Caco-2 (cell line): ENCODE measurements at regions of chr19 and their contacts with region 1.

Region 1: GRCh38 chr19:42450314-42450934 is 7.7 kb upstream of the CXCL17 start:
- DNase-seq: peak; percentile 87
- H3K4me3 ChIP-seq: no peak overlapping the region
- H3K4me3 Mint-ChIP-seq: no peak overlapping the region
- H3K27ac Mint-ChIP-seq: no peak overlapping the region
- H3K4me1 ChIP-seq: peaks cover 31% of the 10 kb centered on the region
- H3K4me1 Mint-ChIP-seq: peaks cover 8% of the 10 kb centered on the region
- H3K27me3 ChIP-seq: no peaks in the 10 kb centered on the region
- H3K27me3 Mint-ChIP-seq: no peaks in the 10 kb centered on the region
- CTCF ChIP-seq: peak; percentile 78 to 95

Region 2: DNA sequence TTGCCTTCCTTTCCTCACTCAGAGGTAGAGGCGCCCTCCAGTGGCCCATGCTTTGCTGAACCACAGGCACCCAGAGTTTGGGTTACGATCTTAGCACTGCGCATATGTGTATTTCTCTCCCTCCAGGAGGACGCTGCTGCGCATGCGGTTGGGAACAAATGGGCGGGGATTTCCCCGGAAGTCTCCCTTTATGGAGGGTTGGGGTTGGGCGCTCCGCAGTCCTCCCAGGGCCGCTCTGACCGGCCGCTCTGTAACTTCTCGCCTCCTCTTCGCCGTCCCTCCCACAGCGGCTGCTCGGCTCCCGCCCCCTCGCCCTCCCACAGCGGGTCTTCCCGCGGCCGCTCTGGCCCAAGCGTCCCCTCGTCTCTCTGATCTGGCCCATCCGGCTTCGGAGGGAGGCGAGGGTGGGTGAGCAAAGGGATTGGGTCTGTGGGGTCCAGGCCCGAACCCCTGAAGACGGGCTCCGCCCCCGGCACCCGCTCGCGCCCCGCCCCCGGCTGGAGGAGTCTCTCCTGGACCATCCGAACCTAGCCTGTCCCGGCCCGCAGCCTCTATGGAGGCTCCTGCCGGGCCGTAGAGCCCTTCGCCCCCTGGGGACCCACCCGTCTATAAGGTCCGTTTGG is 125.0 kb before region 1 on chr19 and contains the start of gene MEGF8:
- CTCF ChIA-PET with region 1: no interaction called
- POLR2A ChIA-PET with region 1: no interaction called
- intact Hi-C with region 1: no loop called
- DNase-seq: peak; percentile 99
- H3K4me3 ChIP-seq: peak within 1 kb of the TSS; percentile 71
- H3K4me3 Mint-ChIP-seq: peak within 1 kb of the TSS; percentile 89
- H3K27ac Mint-ChIP-seq: peak within 1 kb of the TSS; percentile 72
- H3K4me1 ChIP-seq: no peaks in the 10 kb centered on the region; the same call in 1 of the 2 replicates
- H3K4me1 Mint-ChIP-seq: peaks cover 17% of the 10 kb centered on the region
- H3K27me3 ChIP-seq: no peaks in the 10 kb centered on the region
- H3K27me3 Mint-ChIP-seq: peaks cover 3% of the 10 kb centered on the region
- CTCF ChIP-seq: peak; percentile 81 to 91
- total RNA-seq, gene MEGF8: 17.9 and 19.3 TPM in 2 replicates

Region 3: DNA sequence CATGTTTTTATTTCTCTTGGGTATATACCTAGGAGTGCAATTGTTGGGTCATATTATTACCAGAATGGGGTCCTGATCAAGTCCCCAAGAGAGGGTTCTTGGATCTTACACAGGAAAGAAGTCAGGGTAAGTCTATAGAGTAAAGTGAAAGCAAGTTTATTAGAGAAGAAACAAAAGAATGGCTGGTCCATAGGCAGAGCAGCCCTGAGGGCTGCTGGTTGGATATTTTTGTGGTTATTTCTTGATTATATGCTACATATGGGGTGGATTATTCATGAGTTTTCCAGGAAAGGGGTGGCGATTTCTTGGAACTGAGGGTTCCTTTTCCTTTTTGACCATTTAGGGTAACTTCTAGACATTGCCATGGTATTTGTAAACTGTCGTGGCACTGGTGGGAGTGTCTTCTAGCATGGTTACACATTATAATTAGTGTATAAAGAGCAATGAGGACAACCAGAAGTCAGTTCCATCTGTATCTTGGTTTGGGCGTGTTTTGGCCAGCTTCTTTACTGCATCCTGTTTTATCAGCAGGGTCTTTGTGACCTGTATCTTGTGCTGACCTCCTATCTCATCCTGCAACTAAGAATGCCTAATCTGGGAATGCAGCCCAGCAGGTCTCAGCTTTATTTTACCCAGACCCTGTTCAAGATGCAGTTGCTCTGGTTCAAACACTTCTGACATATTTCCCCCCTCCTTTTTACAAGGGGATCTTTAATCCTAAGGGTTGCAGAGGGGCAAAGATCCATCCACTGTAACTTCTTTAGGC is 36.8 kb after region 1 on chr19:
- CTCF ChIA-PET with region 1: interaction called, 5 read pairs
- POLR2A ChIA-PET with region 1: no interaction called
- intact Hi-C with region 1: loop called (anchors 1 kb)
- DNase-seq: peak; percentile 47 to 65
- H3K4me3 ChIP-seq: no peak overlapping the region
- H3K4me3 Mint-ChIP-seq: peak overlapping the region; percentile 17
- H3K27ac Mint-ChIP-seq: peak overlapping the region; percentile 85
- H3K4me1 ChIP-seq: peaks cover 58% of the 10 kb centered on the region
- H3K4me1 Mint-ChIP-seq: peaks cover 25% of the 10 kb centered on the region
- H3K27me3 ChIP-seq: no peaks in the 10 kb centered on the region
- H3K27me3 Mint-ChIP-seq: no peaks in the 10 kb centered on the region
- CTCF ChIP-seq: no peak

Region 4: DNA sequence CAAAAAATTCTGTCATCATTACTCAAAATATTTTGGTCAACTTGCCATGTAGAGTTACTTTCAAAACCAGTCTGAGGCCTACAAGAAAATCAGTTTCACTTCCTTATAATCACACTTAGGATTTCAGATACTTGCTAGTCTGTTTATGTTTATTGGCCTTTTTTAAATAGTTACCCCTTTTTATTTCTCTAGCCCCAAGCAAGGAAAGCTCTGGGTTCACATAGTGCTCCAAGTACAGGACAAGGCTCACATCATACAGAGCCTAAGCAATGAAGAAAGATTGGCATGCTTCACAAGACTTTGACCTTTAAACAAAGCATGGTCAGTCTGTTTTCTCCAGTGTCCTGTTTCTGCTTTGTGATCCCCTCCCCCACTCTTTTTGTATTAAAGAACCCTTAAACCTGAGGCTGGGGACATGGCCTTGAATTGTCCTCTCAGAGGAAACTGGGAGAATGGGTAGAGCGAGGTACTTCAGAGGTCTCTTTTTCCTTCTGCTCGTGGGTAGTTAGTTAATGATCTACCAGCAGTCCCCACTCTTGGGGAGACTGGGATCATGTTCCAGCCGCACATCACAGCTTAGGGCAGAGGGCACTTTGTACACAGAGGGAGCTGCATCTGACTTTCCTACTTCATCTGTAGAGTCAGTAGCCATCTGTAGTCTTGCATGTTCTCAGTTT is 47.2 kb after region 1 on chr19:
- CTCF ChIA-PET with region 1: interaction called, 7 read pairs
- POLR2A ChIA-PET with region 1: no interaction called
- intact Hi-C with region 1: loop called (anchors 1 kb)
- DNase-seq: peak; percentile 81 to 88
- H3K4me3 ChIP-seq: no peak overlapping the region
- H3K4me3 Mint-ChIP-seq: peak overlapping the region; percentile 69
- H3K27ac Mint-ChIP-seq: peak overlapping the region; percentile 32
- H3K4me1 ChIP-seq: peaks cover 33% of the 10 kb centered on the region
- H3K4me1 Mint-ChIP-seq: peaks cover 49% of the 10 kb centered on the region
- H3K27me3 ChIP-seq: no peaks in the 10 kb centered on the region
- H3K27me3 Mint-ChIP-seq: no peaks in the 10 kb centered on the region
- CTCF ChIP-seq: no peak

Region 5: GRCh38 chr19:42529248-42529764 is 78.9 kb after region 1 on chr19:
- CTCF ChIA-PET with region 1: interaction called, 70 read pairs
- POLR2A ChIA-PET with region 1: interaction called, 3 read pairs
- intact Hi-C with region 1: loop called (anchors 1 kb)
- DNase-seq: peak; percentile 74 to 85
- H3K4me3 ChIP-seq: no peak overlapping the region
- H3K4me3 Mint-ChIP-seq: no peak overlapping the region
- H3K27ac Mint-ChIP-seq: peak overlapping the region; percentile 27
- H3K4me1 ChIP-seq: peaks cover 17% of the 10 kb centered on the region
- H3K4me1 Mint-ChIP-seq: peaks cover 32% of the 10 kb centered on the region
- H3K27me3 ChIP-seq: no peaks in the 10 kb centered on the region
- H3K27me3 Mint-ChIP-seq: no peaks in the 10 kb centered on the region
- CTCF ChIP-seq: peak; percentile 95 to 98

Region 6: DNA sequence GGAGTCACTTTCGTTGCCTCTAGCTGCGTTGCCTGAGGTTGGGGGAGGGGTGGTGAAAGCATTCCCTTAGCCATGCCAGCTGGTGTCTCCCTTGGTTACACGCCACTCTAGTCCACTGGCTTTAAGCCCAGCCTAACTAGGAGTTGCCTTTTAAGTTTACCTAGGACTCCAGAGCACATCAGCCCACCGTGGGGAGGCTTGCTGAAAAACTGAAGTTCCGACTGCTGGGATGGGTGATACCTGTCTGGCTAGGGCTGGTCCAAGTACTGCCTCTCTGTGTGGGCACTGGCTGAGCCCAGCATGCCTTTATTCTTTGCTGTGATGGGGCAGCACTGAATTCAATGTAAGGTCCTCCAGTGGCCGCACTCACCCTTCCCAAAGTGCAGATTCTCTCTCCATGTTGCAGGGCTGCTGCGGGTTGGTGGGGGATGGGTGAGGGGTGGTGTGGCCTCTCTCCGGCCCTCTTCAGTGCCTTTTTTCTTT is 89.7 kb after region 1 on chr19:
- CTCF ChIA-PET with region 1: interaction called, 4 read pairs
- POLR2A ChIA-PET with region 1: no interaction called
- intact Hi-C with region 1: loop called (anchors 1 kb)
- DNase-seq: no peak
- H3K4me3 ChIP-seq: no peak overlapping the region
- H3K4me3 Mint-ChIP-seq: no peak overlapping the region
- H3K27ac Mint-ChIP-seq: no peak overlapping the region
- H3K4me1 ChIP-seq: no peaks in the 10 kb centered on the region
- H3K4me1 Mint-ChIP-seq: peaks cover 6% of the 10 kb centered on the region
- H3K27me3 ChIP-seq: no peaks in the 10 kb centered on the region
- H3K27me3 Mint-ChIP-seq: no peaks in the 10 kb centered on the region
- CTCF ChIP-seq: no peak

Region 7: GRCh38 chr19:42563352-42564210 is 113.2 kb after region 1 on chr19:
- CTCF ChIA-PET with region 1: interaction called, 10 read pairs
- POLR2A ChIA-PET with region 1: no interaction called
- intact Hi-C with region 1: loop called (anchors 1 kb)
- DNase-seq: peak; percentile 60 to 63
- H3K4me3 ChIP-seq: no peak overlapping the region
- H3K4me3 Mint-ChIP-seq: no peak overlapping the region
- H3K27ac Mint-ChIP-seq: no peak overlapping the region
- H3K4me1 ChIP-seq: no peaks in the 10 kb centered on the region
- H3K4me1 Mint-ChIP-seq: no peaks in the 10 kb centered on the region
- H3K27me3 ChIP-seq: no peaks in the 10 kb centered on the region
- H3K27me3 Mint-ChIP-seq: peaks cover 8% of the 10 kb centered on the region
- CTCF ChIP-seq: peak; percentile 76 to 87

Region 8: DNA sequence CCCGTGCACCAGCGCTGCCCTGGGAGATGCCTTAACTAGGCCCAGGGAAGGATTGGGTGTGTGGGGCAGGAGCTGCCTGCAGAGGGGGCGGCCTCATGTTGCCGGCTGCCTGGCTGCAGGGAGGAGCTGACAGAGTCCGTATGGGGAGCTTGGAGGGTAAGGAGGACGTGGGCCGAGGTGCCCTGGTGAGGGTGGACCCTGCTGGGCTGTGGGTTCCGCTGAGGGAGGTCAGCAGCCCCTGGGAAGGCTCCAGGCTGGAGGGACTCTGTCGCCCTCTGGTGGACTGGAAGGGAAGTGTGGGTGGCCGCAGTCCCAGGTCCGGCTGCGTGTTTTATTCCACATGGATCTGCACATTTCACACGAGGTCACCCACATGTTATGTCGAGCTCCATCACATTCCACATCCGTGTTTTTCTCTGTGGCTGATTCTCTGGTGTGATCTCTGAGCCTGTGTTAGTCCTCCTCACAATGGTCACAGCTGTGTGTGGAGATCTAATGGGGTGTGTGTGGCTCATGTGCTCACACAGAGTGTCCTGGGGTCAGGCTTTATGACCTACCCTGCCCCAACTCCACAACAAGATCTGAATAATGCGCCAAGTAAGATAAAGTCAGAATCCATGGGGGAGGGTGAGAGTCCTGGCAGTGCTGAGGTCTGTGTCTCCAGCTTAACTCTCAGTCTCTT is 146.1 kb after region 1 on chr19:
- CTCF ChIA-PET with region 1: no interaction called
- POLR2A ChIA-PET with region 1: no interaction called
- intact Hi-C with region 1: loop called (anchors 1 kb)
- DNase-seq: peak in 1 of 2 experiments; percentile 69
- H3K4me3 ChIP-seq: no peak overlapping the region
- H3K4me3 Mint-ChIP-seq: no peak overlapping the region
- H3K27ac Mint-ChIP-seq: no peak overlapping the region
- H3K4me1 ChIP-seq: no peaks in the 10 kb centered on the region
- H3K4me1 Mint-ChIP-seq: no peaks in the 10 kb centered on the region
- H3K27me3 ChIP-seq: no peaks in the 10 kb centered on the region
- H3K27me3 Mint-ChIP-seq: peaks cover 3% of the 10 kb centered on the region
- CTCF ChIP-seq: peak; percentile 94 to 98